ENCODE measurements at regions of chr13 and their contacts with region 1.

Region 1: DNA sequence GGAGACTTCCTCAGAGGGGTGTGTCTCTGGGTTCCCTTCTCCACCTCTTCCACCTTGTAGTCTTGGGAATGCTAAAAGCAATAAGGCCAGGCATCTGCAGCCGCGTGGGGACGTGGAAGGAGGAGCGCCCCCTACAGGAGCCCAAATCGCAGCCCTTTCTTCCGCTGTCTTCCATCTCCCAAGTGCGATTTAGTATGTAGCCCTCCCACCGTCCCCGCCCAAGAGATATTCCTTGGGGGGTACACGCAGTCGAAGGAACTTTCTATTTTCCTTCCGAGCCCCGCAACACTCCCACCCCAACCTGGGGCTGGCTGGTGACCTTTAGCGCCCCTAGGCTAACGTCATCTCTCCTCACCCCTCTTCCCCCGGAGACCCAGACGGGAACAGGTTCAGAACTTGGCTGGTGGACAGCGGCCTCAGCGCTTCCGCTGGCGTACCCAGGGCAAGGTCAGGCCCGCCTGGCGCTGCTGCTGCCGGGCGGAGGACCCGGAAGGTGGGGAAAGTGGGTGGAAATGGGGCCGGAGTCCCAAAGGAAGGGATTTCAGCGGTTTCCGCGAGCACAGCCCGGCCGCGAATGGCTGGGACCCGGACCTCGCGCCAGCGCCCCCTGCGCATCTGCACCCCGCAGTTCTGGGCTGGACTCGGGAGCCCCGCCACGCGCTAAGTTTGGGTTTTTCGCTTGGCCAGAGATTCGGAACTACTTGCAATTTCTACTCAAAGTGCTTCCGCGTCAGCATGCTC is 2.1 kb upstream of the PCDH8 start:
- DNase-seq: peak; percentile 49
- H3K4me3 Mint-ChIP-seq: peak overlapping the region; percentile 69
- H3K27ac Mint-ChIP-seq: peak overlapping the region; percentile 17
- H3K4me1 Mint-ChIP-seq: peaks cover 22% of the 10 kb centered on the region
- H3K27me3 Mint-ChIP-seq: peaks cover 56% of the 10 kb centered on the region

Region 2: DNA sequence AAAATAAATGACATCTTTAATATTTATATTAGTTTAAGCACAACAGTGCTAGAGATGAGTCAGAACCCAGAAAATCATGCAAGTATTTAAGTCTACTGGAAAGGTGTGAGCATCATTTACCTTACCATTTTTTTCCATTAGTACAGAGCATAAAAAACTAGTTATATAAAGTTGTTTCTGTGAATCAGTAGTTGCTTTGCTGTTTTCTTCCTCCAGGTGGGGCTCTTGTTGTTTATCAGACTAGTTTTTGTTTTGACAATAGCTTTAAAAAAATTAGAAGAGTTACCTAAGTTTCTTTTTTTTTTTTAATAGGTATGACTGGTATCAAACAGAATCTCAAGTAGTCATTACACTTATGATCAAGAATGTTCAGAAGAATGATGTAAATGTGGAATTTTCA is 185.2 kb before region 1 on chr13:
- intact Hi-C with region 1: loop called (anchors 10 kb)
- DNase-seq: no peak
- H3K4me3 Mint-ChIP-seq: no peak overlapping the region
- H3K27ac Mint-ChIP-seq: no peak overlapping the region
- H3K4me1 Mint-ChIP-seq: peaks cover 3% of the 10 kb centered on the region
- H3K27me3 Mint-ChIP-seq: no peaks in the 10 kb centered on the region

Region 3: GRCh38 chr13:52830946-52831345 is 19.6 kb before region 1 on chr13:
- intact Hi-C with region 1: no loop called
- DNase-seq: no peak
- H3K4me3 Mint-ChIP-seq: no peak overlapping the region
- H3K27ac Mint-ChIP-seq: no peak overlapping the region
- H3K4me1 Mint-ChIP-seq: no peaks in the 10 kb centered on the region
- H3K27me3 Mint-ChIP-seq: peaks cover 28% of the 10 kb centered on the region

Region 4: DNA sequence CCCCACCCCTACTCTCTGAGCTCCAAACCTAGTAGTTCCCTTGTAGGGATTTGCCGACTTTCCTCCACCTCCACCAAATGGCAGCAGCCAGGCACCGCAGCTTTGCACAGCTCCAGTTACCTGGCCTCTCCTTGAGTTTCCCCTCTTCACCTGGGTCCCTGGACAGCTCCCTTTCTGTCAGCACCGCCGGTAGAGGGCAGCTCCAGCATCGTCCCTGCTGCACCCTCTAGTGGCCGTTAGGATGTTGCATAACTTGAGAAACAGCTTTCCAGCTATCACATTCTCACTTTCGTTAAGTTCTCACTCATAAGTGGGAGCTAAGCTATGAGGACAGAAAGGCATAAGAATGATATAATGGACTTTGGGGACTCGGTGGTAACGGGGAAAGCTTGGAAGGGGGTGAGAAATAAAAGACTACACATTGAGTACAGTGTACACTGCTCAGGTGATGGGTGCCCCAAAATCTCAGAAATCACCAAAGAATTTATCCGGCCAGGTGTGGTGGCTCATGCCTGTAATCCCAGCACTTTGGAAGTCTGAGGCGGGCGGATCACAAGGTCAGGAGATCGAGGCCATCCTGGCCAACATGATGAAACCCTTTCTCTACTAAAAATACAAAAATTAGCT is 117.6 kb after region 1 on chr13:
- intact Hi-C with region 1: loop called (anchors 2 kb)
- DNase-seq: peak; percentile 41
- H3K4me3 Mint-ChIP-seq: no peak overlapping the region
- H3K27ac Mint-ChIP-seq: no peak overlapping the region
- H3K4me1 Mint-ChIP-seq: no peaks in the 10 kb centered on the region
- H3K27me3 Mint-ChIP-seq: peaks cover 3% of the 10 kb centered on the region

Region 5: DNA sequence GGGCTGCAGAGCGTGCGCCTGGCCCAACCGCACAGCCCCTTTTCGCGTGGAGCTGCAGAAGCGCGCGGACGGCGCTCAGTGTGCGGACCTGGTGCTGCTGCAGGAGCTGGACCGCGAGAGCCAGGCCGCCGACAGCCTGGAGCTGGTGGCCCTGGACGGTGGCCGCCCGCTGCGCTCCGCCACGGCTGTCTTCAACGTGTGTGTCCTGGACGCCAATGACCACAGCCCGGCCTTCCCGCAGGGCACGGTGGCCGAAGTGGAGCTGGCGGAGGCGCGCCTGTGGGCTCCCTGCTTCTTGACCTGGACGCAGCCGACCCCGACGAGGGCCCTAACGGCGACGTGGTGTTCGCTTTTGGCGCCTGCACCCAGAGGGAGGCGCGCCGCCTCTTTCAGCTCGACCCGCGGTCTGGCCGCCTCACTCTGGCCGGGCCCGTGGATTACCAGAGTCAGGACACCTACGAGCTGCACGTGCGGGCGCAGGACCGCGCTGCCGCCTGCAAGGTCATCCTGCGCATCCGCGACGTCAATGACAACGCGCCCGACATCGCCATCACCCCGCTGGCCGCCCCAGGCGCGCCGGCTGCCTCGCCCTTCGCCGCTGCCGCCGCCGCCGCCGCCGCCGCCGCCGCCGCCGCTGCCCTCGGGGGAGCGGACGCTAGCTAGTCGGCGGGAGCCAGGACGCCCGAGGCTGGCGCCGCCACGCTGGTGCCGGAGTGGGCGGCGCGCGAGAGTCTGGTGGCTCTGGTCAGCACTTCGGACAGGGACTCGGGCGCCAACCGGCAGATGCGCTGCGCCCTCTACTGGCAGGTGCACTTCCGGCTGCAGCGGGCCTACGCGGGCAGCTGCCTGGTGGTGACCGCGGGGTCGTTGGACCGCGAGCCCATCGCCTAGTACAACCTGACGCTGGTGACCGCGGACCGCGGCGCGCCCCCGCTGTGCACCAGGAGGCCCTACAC is 350.2 kb after region 1 on chr13:
- intact Hi-C with region 1: loop called (anchors 5 kb)
- DNase-seq: no peak
- H3K4me3 Mint-ChIP-seq: no peak overlapping the region
- H3K27ac Mint-ChIP-seq: no peak overlapping the region
- H3K4me1 Mint-ChIP-seq: no peaks in the 10 kb centered on the region
- H3K27me3 Mint-ChIP-seq: no peaks in the 10 kb centered on the region

Measured in activated T-helper 2 cell treated with anti-CD3 and anti-CD28 coated beads, Interferon-gamma antibody, Interleukin-2, Interleukin-4, amounts not matched to agents 10 μg/mL and 5 μg/mL and 100 μg/mL, durations not matched to agents 14 hours and 24 hours and 36 hours (primary cell).